Natural killer cell (primary cell): ENCODE measurements at regions of chr19 and their contacts with region 1.

Region 1: GRCh38 chr19:43503501-43504425 is 783 bp downstream of the PHLDB3 start:
- DNase-seq: peak; percentile 96 to 98
- ATAC-seq: peak; percentile 96 to 100 (median 97)
- H3K4me3 ChIP-seq: peak overlapping the region; percentile 77
- H3K4me3 Mint-ChIP-seq: peak overlapping the region; percentile 77
- H3K27ac ChIP-seq: peak overlapping the region; percentile 72
- H3K27ac Mint-ChIP-seq: peak overlapping the region; percentile 65 to 93
- H3K4me1 ChIP-seq: peaks cover 21% of the 10 kb centered on the region
- H3K4me1 Mint-ChIP-seq: peaks cover 21 to 30% of the 10 kb centered on the region in 2 donors
- H3K27me3 ChIP-seq: no peaks in the 10 kb centered on the region
- H3K27me3 Mint-ChIP-seq: no peaks in the 10 kb centered on the region
- CTCF ChIP-seq: no peak

Region 2: GRCh38 chr19:43474986-43475705 is 28.6 kb before region 1 on chr19:
- intact Hi-C with region 1: loop called (anchors 1 kb)
- DNase-seq: peak; percentile 98 to 99
- ATAC-seq: peak; percentile 95 to 98 (median 97)
- H3K4me3 ChIP-seq: peak overlapping the region; percentile 45
- H3K4me3 Mint-ChIP-seq: peak overlapping the region; percentile 89
- H3K27ac ChIP-seq: peak overlapping the region; percentile 86
- H3K27ac Mint-ChIP-seq: peak overlapping the region; percentile 94 to 97
- H3K4me1 ChIP-seq: peaks cover 14% of the 10 kb centered on the region
- H3K4me1 Mint-ChIP-seq: peaks cover 6 to 17% of the 10 kb centered on the region in 2 donors
- H3K27me3 ChIP-seq: no peaks in the 10 kb centered on the region
- H3K27me3 Mint-ChIP-seq: no peaks in the 10 kb centered on the region
- CTCF ChIP-seq: no peak

Region 3: DNA sequence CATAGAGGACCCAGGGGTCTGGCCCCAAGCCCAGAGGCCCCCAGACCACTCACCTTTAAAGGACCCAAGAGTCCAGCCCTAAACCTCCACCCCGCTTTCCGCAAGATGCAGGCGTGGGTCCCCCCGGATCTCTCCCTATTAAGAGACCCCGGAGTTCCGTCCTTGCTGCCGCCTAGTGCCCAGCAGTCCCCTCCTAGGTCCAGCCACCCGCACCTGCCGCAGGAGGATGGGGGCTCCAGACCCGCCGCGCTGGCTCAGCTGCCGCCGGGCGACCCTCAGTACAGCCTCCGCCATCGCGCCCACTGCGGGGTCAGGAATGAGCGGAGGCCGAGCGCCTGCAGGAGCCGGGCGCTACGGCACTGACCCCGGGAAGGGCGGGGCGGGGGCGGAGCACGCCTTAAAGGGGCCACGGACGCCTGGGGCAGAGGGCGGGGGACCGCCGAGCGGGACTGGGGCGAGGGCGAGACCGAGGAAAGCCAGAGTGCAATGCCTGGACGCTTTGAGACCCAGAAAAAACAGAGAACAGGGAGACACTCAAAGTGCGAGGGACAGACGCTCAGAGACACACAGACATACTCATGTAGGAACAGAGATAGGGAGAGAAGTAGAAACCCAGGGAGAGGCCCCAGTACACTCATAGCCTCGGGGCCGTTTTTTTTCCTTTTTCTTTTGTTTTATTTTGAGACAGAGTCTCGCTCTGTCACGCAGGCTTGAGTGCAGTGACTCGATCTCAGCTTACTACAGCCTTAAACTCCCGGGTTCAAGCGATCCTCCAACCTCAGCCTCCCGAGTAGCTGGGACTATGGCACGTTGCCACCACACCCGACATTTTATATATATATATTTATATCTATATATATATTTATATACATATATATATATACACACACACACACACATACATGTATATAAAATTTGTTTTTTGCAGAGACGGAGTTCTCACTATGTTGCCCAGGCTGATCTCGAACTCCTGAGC is 23.4 kb after region 1 on chr19 and contains the start of gene ETHE1:
- intact Hi-C with region 1: loop called (anchors 1 kb)
- DNase-seq: peak; percentile 71 to 76
- ATAC-seq: peak; percentile 89 to 93 (median 91)
- H3K4me3 ChIP-seq: peak within 1 kb of the TSS; percentile 82
- H3K4me3 Mint-ChIP-seq: peak within 1 kb of the TSS; percentile 69
- H3K27ac ChIP-seq: peak within 1 kb of the TSS; percentile 75
- H3K27ac Mint-ChIP-seq: peak within 1 kb of the TSS; percentile 77 to 90
- H3K4me1 ChIP-seq: peaks cover 33% of the 10 kb centered on the region
- H3K4me1 Mint-ChIP-seq: peaks cover 24 to 27% of the 10 kb centered on the region in 2 donors
- H3K27me3 ChIP-seq: no peaks in the 10 kb centered on the region
- H3K27me3 Mint-ChIP-seq: no peaks in the 10 kb centered on the region
- CTCF ChIP-seq: no peak
- total RNA-seq, gene ETHE1: 22.0 to 25.6 (median 24.6) TPM